ENCODE measurements at regions of chr1 and their contacts with region 1.

Region 1: GRCh38 chr1:8026153-8026975 is at the start of gene ERRFI1:
- DNase-seq: peak; percentile 95 to 97 (median 96)
- ATAC-seq: peak; percentile 69 to 81 (median 77)
- H3K4me3 ChIP-seq: peak within 1 kb of the TSS; percentile 70 to 78 (median 76)
- H3K27ac ChIP-seq: peak within 1 kb of the TSS; percentile 97 to 100 (median 100)
- H3K4me1 ChIP-seq: peaks cover 0 to 39% (median 7%) of the 10 kb centered on the region in 4 donors
- H3K27me3 ChIP-seq: no peaks in the 10 kb centered on the region
- CTCF ChIP-seq: no peak
- POLR2A ChIP-seq: peak; percentile 100
- total RNA-seq, gene ERRFI1: 109 to 539 (median 214) TPM

Region 2: DNA sequence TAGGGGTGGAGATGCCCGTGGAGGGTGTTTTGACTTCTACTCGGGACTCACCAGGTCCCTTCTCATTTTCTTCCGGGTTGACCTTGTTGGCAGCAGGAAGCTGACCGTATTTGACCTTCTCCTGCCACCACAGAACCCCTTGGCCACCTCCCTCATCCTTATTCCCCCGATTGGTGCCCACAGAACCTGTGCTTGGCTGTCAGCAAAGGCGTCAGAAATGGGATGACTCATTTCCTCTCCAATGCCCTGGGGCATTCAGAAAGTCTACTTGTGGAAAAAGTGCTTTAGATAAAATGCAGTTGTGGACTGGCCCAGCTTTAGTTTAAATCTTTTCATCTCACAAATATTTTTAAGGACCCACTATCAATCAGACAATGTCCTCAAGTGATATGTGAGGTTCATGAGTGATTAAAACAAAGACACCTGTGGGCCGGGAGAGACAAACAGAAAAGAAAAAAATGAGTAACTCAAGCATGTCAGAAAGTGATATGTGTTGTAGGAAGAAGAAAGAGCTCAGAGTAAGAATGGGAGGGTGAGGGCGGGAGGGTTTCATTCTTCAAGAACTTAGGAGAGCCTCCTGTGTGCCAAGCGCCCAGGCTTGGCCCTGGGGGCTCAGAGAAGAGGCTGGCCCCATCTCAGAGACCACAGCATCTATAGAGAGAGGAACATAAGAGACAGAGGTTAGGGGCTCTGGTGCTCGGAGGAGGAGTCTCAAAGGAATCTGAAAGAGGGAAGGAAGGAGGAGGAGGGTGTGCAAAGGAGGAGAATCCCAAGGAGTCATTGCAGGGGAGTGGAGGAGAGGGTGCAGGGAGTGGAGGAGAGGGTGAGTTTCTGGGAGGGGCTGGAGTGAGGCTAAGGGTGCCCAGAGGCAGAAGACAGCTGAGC is 476.8 kb before region 1 on chr1:
- intact Hi-C with region 1: no loop called
- DNase-seq: peak in 1 of 3 donors; percentile 23
- ATAC-seq: no peak
- H3K4me3 ChIP-seq: no peak overlapping the region
- H3K27ac ChIP-seq: no peak overlapping the region
- H3K4me1 ChIP-seq: peaks cover 0 to 14% (median 0%) of the 10 kb centered on the region in 4 donors
- H3K27me3 ChIP-seq: no peaks in the 10 kb centered on the region
- CTCF ChIP-seq: no peak
- POLR2A ChIP-seq: no peak

Region 3: DNA sequence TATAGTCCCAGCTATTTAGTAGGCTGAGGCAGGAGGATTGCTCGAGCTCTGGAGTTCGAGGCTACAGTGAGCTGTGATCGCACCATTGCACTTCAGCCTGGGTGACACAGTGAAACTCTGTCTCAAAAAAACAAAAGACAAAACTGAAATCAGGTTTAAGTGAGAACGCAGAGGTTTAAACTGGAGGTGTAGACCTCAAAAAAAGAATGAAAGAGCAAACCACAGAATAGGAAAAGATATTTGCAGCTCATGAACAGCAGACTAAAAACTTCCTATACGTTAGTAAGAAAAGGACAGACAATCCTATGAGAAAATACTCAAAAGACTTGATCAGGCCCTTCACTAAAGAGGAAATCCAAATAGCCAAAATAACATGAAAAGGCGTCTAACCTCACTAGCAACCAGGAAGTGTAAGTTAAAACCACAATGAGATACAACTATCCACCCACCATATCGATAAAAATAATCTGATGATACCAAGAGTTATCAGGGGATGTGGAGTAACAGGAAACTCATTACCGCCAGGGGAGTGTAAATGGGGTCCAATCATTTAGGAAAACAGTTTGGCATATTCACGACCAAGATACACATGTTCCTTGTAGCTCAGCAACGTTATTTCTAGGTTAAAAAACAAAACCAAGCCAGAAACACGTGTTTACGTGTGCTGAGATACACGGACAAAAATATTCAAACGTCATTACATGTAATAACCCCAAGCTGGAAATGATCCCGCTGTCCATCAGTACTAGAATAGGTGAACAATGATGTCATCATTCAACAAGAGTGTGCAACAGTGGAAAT is 95.5 kb before region 1 on chr1:
- intact Hi-C with region 1: no loop called
- DNase-seq: no peak
- ATAC-seq: no peak
- H3K4me3 ChIP-seq: no peak overlapping the region
- H3K27ac ChIP-seq: no peak overlapping the region
- H3K4me1 ChIP-seq: no peaks in the 10 kb centered on the region
- H3K27me3 ChIP-seq: no peaks in the 10 kb centered on the region
- CTCF ChIP-seq: no peak
- POLR2A ChIP-seq: no peak

Region 4: GRCh38 chr1:7975212-7975865 is 51.0 kb before region 1 on chr1:
- intact Hi-C with region 1: no loop called
- DNase-seq: peak; percentile 68 to 80 (median 76)
- ATAC-seq: peak; percentile 99 to 100 (median 100)
- H3K4me3 ChIP-seq: no peak overlapping the region
- H3K27ac ChIP-seq: no peak overlapping the region
- H3K4me1 ChIP-seq: peaks cover 0 to 14% (median 1%) of the 10 kb centered on the region in 4 donors
- H3K27me3 ChIP-seq: no peaks in the 10 kb centered on the region
- CTCF ChIP-seq: peak; percentile 87 to 93 (median 90)
- POLR2A ChIP-seq: no peak

Region 5: DNA sequence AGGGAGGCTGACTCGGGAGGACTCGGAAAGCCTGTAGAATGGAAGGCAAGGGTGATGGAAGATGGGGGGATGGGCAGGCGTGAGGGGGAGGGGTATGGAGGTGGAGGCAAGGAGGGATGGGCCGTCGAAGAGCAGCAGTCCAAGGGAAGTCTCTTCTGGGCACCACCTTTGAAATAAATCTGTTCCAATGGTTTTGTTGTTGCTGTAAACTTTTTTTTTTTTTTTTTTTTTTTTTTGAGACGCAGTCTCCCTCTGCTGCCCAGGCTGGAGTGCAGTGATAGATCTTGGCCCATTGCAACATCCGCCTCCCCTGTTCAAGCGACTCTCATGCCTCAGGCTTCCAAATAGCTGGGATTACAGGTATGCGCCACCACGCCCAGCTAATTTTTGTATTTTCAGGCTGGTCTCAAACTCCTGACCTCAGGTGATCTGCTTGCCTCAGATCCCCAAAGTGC is 212.5 kb after region 1 on chr1:
- intact Hi-C with region 1: loop called in 1 of 2 experiments (anchors 10 kb)
- DNase-seq: peak; percentile 52 to 70 (median 69)
- ATAC-seq: peak; percentile 65 to 83 (median 74)
- H3K4me3 ChIP-seq: no peak overlapping the region
- H3K27ac ChIP-seq: peak overlapping the region; percentile 59 to 75 (median 69)
- H3K4me1 ChIP-seq: peaks cover 0 to 35% (median 12%) of the 10 kb centered on the region in 4 donors
- H3K27me3 ChIP-seq: no peaks in the 10 kb centered on the region
- CTCF ChIP-seq: peak in 3 of 4 donors; percentile 33 to 43 (median 39)
- POLR2A ChIP-seq: no peak

Measured in right lobe of liver (tissue), 6 donors.